ENCODE measurements at regions of chr11 and their contacts with region 1.

Region 1: DNA sequence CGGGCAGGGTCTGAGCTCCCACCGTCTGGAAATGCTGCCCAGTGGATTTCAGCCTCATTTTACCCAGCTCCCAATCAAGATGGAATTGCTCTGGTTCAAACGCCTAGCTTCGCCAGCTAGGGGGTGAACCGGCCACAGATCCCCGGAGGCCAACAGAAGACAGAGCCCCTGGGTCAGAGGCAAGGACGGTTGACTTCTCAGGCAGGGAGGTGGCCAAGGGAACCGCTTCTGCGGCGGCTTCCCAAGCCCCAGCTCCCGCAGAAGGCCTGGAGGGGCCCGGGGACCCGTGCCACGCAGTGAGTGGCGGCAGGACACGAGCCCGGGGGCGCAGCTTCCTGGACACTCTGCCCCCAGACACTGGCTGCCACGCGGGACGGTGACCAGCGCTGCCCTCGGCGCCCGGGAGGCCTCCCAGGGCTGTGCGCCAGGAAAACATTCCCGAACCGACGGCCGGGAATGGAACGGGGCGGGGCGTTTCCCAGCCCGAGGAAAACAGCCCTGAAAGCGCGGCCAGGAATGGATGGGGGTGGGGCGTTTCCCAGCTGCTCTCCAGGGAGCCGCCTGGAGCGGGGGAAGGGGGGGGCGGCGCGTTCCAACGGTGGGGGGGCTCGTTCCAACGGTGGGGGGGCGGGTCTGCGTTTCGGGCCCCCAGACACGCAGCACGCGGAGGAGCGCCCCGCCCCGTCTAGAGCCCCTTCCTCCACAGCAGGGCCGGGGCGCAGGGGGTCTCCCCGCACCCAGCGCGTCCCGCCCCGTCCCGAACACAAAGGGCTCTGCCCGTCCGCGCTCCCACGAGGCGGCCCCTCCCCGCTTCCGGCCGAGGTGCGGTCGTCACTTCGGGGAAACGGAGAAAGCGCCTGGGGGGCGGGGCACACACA is 13.5 kb upstream of the B4GALNT4 start:
- H3K4me3 Mint-ChIP-seq: peak overlapping the region; percentile 25
- H3K27ac Mint-ChIP-seq: no peak overlapping the region
- H3K4me1 Mint-ChIP-seq: peaks cover 33% of the 10 kb centered on the region
- H3K27me3 Mint-ChIP-seq: peaks cover 58% of the 10 kb centered on the region

Region 2: DNA sequence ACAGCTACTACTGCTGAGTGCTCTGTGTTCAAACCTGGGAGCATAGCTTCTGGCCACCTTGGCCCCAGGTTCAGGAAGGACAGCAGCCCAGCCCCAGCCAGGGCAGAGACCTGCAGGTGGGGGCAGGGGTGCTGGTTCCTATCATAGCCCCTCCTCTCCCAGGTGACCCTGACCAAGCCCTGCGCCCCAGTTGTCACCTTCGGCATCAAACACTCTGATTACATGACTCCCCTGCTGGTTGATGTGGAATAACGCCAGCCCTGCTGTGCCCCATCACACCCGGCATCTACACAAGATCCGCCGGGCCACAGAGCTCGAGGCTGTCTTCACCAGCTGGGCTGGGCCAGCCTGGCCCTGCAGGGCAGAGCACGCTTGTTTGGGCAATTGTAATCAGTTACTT is 156.0 kb before region 1 on chr11:
- intact Hi-C with region 1: loop called (anchors 5 kb)
- H3K4me3 Mint-ChIP-seq: no peak overlapping the region
- H3K27ac Mint-ChIP-seq: no peak overlapping the region
- H3K4me1 Mint-ChIP-seq: peaks cover 37% of the 10 kb centered on the region
- H3K27me3 Mint-ChIP-seq: peaks cover 11% of the 10 kb centered on the region

Region 3: GRCh38 chr11:250740-251299 is 105.0 kb before region 1 on chr11:
- intact Hi-C with region 1: loop called (anchors 5 kb)
- H3K4me3 Mint-ChIP-seq: no peak overlapping the region
- H3K27ac Mint-ChIP-seq: no peak overlapping the region
- H3K4me1 Mint-ChIP-seq: peaks cover 9% of the 10 kb centered on the region
- H3K27me3 Mint-ChIP-seq: peaks cover 1% of the 10 kb centered on the region

Region 4: DNA sequence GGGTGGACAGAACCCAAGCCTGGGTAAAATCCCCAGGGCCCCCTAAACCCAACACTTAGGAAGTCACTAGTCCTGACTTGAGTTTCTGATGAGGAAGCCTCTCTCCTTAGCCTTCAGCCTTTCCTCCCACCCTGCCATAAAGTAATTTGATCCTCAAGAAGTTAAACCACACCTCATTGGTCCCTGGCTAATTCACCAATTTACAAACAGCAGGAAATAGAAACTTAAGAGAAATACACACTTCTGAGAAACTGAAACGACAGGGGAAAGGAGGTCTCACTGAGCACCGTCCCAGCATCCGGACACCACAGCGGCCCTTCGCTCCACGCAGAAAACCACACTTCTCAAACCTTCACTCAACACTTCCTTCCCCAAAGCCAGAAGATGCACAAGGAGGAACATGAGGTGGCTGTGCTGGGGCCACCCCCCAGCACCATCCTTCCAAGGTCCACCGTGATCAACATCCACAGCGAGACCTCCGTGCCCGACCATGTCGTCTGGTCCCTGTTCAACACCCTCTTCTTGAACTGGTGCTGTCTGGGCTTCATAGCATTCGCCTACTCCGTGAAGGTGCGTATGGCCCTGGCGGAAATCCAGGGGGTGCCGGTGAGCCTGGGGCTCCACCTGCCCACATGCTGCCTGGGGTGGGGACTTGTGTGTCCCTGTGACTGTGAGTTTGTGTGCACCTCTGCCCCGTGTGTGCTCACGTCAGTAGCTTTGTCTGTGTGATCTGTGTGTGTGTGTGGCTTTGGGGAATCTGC is 41.9 kb before region 1 on chr11 and contains the start of gene IFITM1:
- intact Hi-C with region 1: loop called (anchors 5 kb)
- H3K4me3 Mint-ChIP-seq: no peak within 1 kb of the TSS
- H3K27ac Mint-ChIP-seq: no peak within 1 kb of the TSS
- H3K4me1 Mint-ChIP-seq: peaks cover 35% of the 10 kb centered on the region
- H3K27me3 Mint-ChIP-seq: peaks cover 58% of the 10 kb centered on the region